AG04449 (cell line): ENCODE measurements at regions of chr10 and their contacts with region 1.

Region 1: DNA sequence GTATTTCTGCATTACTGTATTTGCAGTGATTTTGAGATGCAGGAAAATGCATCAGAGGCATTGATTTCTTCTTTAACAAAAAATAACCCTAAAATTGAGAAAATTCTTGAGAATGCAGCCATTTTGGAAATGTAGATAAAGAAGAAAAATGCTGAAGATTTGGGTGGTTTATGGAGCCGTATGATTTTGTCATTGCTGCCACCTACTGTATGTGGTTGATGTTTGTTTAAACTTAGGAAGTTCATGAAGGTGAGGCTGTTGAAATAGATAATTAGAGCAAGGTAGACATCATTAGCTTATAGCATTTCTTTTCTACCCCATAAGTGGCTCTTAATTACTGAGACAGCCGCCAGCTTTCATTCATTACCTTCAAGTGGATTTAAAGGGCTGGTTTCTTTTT is 92.1 kb upstream of the SAMD8 start:
- DNase-seq: no peak
- H3K4me3 ChIP-seq: no peak overlapping the region
- CTCF ChIP-seq: no peak

Region 2: GRCh38 chr10:75008952-75009351 is 10.4 kb before region 1 on chr10:
- CTCF ChIA-PET with region 1: interaction called, 10 read pairs
- POLR2A ChIA-PET with region 1: no interaction called
- DNase-seq: no peak
- H3K4me3 ChIP-seq: no peak overlapping the region
- CTCF ChIP-seq: no peak